B cell (primary cell): ENCODE measurements at regions of chr2 and their contacts with region 1.

Region 1: GRCh38 chr2:25376750-25377621 is 35.3 kb upstream of the DNMT3A start:
- DNase-seq: peak; percentile 94
- ATAC-seq: peak; percentile 99
- H3K4me3 ChIP-seq: peak overlapping the region in 3 of 5 experiments; percentile 6 to 37 (median 29)
- H3K4me3 Mint-ChIP-seq: peak overlapping the region; percentile 78
- H3K27ac ChIP-seq: peak overlapping the region; percentile 80 to 87
- H3K27ac Mint-ChIP-seq: peak overlapping the region; percentile 92
- H3K4me1 ChIP-seq: peaks cover 31 to 41% of the 10 kb centered on the region in 2 donors
- H3K4me1 Mint-ChIP-seq: peaks cover 34% of the 10 kb centered on the region
- H3K27me3 ChIP-seq: no peaks in the 10 kb centered on the region
- H3K27me3 Mint-ChIP-seq: no peaks in the 10 kb centered on the region
- CTCF ChIP-seq: peak; percentile 97

Region 2: DNA sequence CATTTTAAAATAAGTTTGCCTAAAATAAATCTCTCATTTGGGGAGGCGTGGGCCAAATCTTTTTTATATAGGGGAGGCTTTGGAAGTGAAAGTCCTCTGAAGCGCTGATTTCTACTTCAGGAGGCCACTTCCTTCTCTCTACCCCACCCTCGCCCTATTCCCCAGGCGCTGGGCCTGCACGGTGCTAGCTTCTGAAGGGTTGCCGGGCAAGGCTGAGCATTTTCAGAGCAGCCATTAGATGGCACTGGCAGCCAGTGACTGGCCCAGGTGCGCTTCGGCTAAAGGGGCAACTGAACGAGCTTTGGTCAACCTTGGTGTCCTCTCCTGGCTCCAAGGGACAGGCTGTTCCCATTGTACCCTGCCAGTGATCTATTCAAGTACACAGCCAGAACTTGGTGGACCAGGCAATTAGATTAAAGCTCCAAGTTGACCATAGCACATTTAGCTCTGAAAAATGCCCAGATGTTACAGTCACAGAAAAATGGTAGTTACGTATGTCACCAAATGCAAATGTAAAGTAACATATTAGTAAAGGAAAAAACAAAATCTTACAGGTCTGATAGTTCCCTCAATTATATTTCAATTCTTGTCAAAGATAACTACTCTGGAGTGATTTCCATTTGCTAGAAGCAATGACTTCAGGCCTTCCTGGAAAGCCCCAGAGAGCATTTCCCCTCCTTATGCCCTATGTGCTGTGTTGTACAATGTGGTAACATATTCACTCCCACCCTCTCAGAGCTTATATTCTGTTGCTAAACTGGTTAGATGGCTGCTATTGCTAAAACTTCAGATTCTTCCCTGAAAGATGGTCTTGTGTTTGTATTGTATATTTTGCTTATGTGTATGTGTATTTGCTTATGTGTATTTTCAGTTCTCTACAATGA is 210.8 kb before region 1 on chr2:
- CTCF ChIA-PET with region 1: interaction called, 14 read pairs
- POLR2A ChIA-PET with region 1: no interaction called
- intact Hi-C with region 1: no loop called
- DNase-seq: peak; percentile 90
- ATAC-seq: peak; percentile 95
- H3K4me3 ChIP-seq: no peak overlapping the region
- H3K4me3 Mint-ChIP-seq: peak overlapping the region; percentile 76
- H3K27ac ChIP-seq: peak overlapping the region; percentile 34 to 46
- H3K27ac Mint-ChIP-seq: no peak overlapping the region
- H3K4me1 ChIP-seq: peaks cover 36 to 40% of the 10 kb centered on the region in 2 donors
- H3K4me1 Mint-ChIP-seq: peaks cover 41% of the 10 kb centered on the region
- H3K27me3 ChIP-seq: peaks cover 0 to 34% (median 21%) of the 10 kb centered on the region in 4 experiments
- H3K27me3 Mint-ChIP-seq: peaks cover 36% of the 10 kb centered on the region
- CTCF ChIP-seq: peak; percentile 67

Region 3: DNA sequence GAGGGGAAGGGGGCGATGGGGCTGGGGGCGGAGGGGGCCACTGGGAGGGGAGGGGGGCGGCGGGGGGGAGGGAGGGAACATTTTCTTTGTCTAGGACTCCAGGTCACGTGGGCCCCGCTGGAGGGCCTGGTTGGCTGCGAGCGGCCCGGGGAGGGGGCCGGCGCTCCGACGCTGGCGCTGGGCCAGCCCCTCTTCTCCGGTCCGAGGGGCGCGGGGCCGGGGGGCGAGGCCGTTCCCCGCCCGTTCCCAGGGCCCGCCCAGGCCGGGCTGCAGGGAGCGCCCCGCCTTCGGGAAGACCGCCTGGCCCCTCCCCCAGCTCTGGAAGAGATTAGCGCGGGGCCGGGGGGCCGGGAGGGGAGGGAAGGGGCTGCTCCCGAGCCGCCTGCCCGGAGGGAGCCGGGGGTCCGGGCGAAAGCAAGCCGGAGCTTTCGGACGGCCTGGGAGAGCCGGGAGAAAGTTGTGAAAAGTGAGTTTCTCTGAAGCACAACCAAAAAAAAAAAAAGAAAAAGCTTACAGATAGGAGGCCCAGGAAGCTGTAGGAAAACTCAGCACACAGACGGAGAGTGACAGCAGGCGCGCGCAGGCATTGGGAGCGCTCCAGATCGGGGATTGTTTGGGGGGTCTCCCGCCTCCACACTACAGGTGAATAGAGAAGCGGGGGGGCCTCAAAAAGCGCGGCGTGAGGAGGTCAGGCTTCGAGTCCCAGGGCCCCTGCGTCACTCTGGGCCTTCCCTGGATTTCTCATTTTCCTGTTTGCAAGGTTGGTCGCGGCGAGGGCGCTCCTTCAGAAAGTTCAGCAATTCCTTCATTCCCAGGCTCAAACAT is 124.5 kb before region 1 on chr2:
- CTCF ChIA-PET with region 1: no interaction called
- POLR2A ChIA-PET with region 1: no interaction called
- intact Hi-C with region 1: no loop called
- DNase-seq: peak; percentile 66
- ATAC-seq: peak; percentile 76
- H3K4me3 ChIP-seq: peak overlapping the region in 4 of 5 experiments; percentile 69 to 91 (median 76)
- H3K4me3 Mint-ChIP-seq: peak overlapping the region; percentile 88
- H3K27ac ChIP-seq: peak overlapping the region; percentile 12 to 74
- H3K27ac Mint-ChIP-seq: peak overlapping the region; percentile 46
- H3K4me1 ChIP-seq: peaks cover 9 to 26% of the 10 kb centered on the region in 2 donors
- H3K4me1 Mint-ChIP-seq: peaks cover 21% of the 10 kb centered on the region
- H3K27me3 ChIP-seq: no peaks in the 10 kb centered on the region
- H3K27me3 Mint-ChIP-seq: no peaks in the 10 kb centered on the region
- CTCF ChIP-seq: no peak

Region 4: DNA sequence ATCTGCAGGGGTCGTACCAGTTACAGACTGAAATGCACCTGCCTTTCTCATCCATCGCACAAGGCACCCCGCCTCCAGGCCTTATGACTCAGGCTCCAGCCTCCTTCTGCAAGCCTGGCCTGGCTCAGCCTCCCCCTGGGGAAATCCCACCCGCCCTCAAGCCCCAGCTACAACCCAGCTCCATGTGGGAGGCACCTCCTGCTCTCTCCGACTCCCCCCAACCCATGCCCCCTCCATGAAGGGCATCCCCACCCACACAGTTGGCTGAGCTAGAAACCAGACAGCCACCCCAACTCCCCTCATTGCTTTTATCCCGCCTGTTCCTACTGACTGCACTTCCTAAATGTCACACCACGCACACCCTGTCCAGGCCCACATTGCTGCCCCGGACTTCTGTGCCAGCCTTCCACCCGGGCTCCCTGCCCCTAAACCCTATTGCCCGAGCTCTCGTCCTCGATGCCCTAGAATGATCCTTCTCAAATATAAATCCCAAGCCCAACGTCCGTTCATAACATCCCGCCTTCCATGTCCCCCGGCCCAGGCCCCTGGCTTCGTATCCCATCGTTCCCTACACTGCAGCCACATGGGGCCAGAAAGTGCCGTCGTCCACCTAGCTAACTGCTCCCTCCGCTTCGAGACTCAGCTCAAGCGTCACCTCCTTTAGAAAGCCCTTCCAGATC is 45.2 kb before region 1 on chr2:
- CTCF ChIA-PET with region 1: no interaction called
- POLR2A ChIA-PET with region 1: no interaction called
- intact Hi-C with region 1: no loop called
- DNase-seq: no peak
- ATAC-seq: no peak
- H3K4me3 ChIP-seq: no peak overlapping the region
- H3K4me3 Mint-ChIP-seq: no peak overlapping the region
- H3K27ac ChIP-seq: no peak overlapping the region
- H3K27ac Mint-ChIP-seq: no peak overlapping the region
- H3K4me1 ChIP-seq: peaks cover 14 to 21% of the 10 kb centered on the region in 2 donors
- H3K4me1 Mint-ChIP-seq: peaks cover 39% of the 10 kb centered on the region
- H3K27me3 ChIP-seq: peaks cover 0 to 7% (median 1%) of the 10 kb centered on the region in 4 experiments
- H3K27me3 Mint-ChIP-seq: no peaks in the 10 kb centered on the region
- CTCF ChIP-seq: no peak

Region 5: GRCh38 chr2:25342372-25343186 is 34.4 kb before region 1 on chr2:
- CTCF ChIA-PET with region 1: interaction called, 11 read pairs
- POLR2A ChIA-PET with region 1: no interaction called
- intact Hi-C with region 1: loop called (anchors 1 kb)
- DNase-seq: peak; percentile 90
- ATAC-seq: peak; percentile 91
- H3K4me3 ChIP-seq: peak overlapping the region in 4 of 5 experiments; percentile 37 to 70 (median 55)
- H3K4me3 Mint-ChIP-seq: peak overlapping the region; percentile 85
- H3K27ac ChIP-seq: no peak overlapping the region
- H3K27ac Mint-ChIP-seq: peak overlapping the region; percentile 87
- H3K4me1 ChIP-seq: peaks cover 8 to 10% of the 10 kb centered on the region in 2 donors
- H3K4me1 Mint-ChIP-seq: peaks cover 20% of the 10 kb centered on the region
- H3K27me3 ChIP-seq: peaks cover 0 to 4% (median 1%) of the 10 kb centered on the region in 4 experiments
- H3K27me3 Mint-ChIP-seq: no peaks in the 10 kb centered on the region
- CTCF ChIP-seq: peak; percentile 96

Region 6: GRCh38 chr2:25402477-25402876 is 25.5 kb after region 1 on chr2:
- CTCF ChIA-PET with region 1: interaction called, 14 read pairs
- POLR2A ChIA-PET with region 1: no interaction called
- intact Hi-C with region 1: loop called (anchors 1 kb)
- DNase-seq: peak; percentile 50
- ATAC-seq: peak; percentile 23
- H3K4me3 ChIP-seq: no peak overlapping the region
- H3K4me3 Mint-ChIP-seq: peak overlapping the region; percentile 46
- H3K27ac ChIP-seq: peak overlapping the region; percentile 69 to 77
- H3K27ac Mint-ChIP-seq: peak overlapping the region; percentile 79
- H3K4me1 ChIP-seq: peaks cover 72 to 87% of the 10 kb centered on the region in 2 donors
- H3K4me1 Mint-ChIP-seq: peaks cover 81% of the 10 kb centered on the region
- H3K27me3 ChIP-seq: no peaks in the 10 kb centered on the region
- H3K27me3 Mint-ChIP-seq: no peaks in the 10 kb centered on the region
- CTCF ChIP-seq: no peak

Region 7: DNA sequence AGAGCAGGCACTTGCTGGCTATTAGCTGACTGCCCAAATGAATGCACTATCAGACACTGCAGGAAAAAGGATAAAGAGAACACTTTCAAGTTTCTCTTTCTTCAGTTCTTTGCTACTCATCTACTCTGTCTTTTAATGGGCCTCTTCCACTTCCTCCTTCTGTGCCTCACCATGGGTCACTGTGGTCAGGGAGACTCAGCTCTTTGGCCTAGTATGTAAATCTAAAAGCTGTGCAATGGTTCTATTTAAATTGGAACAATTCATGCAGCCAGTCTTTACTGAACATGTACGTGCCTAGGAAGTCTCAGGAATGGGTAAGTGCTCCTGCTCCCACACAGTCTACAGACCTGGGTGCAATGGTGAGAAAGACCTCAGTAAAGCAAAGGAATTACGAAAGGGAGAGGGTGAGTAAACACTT is 43.8 kb after region 1 on chr2:
- CTCF ChIA-PET with region 1: interaction called, 24 read pairs
- POLR2A ChIA-PET with region 1: interaction called, 6 read pairs
- intact Hi-C with region 1: loop called (anchors 1 kb)
- DNase-seq: peak; percentile 60
- ATAC-seq: peak; percentile 42
- H3K4me3 ChIP-seq: peak overlapping the region in 4 of 5 experiments; percentile 19 to 57 (median 34)
- H3K4me3 Mint-ChIP-seq: peak overlapping the region; percentile 84
- H3K27ac ChIP-seq: peak overlapping the region; percentile 89 to 94
- H3K27ac Mint-ChIP-seq: peak overlapping the region; percentile 96
- H3K4me1 ChIP-seq: peaks cover 79 to 86% of the 10 kb centered on the region in 2 donors
- H3K4me1 Mint-ChIP-seq: peaks cover 85% of the 10 kb centered on the region
- H3K27me3 ChIP-seq: no peaks in the 10 kb centered on the region
- H3K27me3 Mint-ChIP-seq: no peaks in the 10 kb centered on the region
- CTCF ChIP-seq: no peak

Region 8: GRCh38 chr2:25521665-25522387 is 144.8 kb after region 1 on chr2:
- CTCF ChIA-PET with region 1: interaction called, 11 read pairs
- POLR2A ChIA-PET with region 1: no interaction called
- intact Hi-C with region 1: loop called (anchors 1 kb)
- DNase-seq: peak; percentile 87
- ATAC-seq: peak; percentile 100
- H3K4me3 ChIP-seq: peak overlapping the region in 2 of 5 experiments; percentile 19 to 35
- H3K4me3 Mint-ChIP-seq: peak overlapping the region; percentile 3
- H3K27ac ChIP-seq: no peak overlapping the region
- H3K27ac Mint-ChIP-seq: no peak overlapping the region
- H3K4me1 ChIP-seq: peaks cover 7 to 16% of the 10 kb centered on the region in 2 donors
- H3K4me1 Mint-ChIP-seq: peaks cover 19% of the 10 kb centered on the region
- H3K27me3 ChIP-seq: no peaks in the 10 kb centered on the region
- H3K27me3 Mint-ChIP-seq: no peaks in the 10 kb centered on the region
- CTCF ChIP-seq: peak; percentile 84